Breast epithelium (tissue), 4 donors: ENCODE measurements at regions of chr7 and their contacts with region 1.

Region 1: DNA sequence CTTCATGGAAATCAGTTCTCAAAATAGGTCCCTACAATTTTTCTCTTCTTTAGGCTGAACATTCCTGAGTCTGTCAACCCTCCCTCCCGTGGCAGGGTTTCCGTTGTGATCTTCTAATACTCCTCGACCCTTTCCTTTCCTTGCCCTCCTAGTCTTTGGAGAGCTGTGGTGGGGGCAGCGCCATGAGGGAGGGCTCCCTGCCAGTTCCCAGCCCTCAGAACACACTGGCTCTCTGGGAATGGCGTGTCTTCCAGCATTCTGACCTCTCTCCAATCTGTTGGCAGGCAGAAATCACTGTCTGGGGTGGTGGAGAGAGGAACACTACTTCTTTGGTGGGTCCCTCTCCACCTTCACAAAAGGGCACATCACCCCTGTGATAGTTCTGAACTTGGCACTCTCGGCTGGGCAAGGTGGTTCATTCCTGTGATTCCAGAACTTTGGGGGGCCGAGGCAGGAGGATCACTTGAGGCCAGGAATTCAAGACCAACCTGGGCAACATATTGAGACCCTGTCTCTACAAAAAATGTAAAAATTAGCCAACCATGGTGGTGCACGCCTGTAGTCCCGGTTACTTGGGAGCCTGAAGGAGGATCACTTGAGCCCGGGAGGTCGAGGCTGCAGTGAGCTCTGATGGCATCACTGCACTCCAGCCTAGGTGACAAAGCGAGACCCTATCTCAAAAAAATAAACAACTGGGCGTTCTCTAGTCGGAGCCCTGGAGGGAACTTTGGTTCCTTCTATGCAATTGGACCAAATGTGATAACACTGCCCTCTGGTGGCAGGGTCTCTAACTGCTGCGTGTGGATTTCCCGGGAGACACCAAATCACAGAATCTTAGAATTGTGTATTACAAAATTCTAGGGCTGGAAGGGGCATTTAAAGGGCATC is 13.1 kb upstream of the ARPC1A start:
- DNase-seq: peak; percentile 52 to 71
- H3K4me3 ChIP-seq: no peak overlapping the region
- H3K27ac ChIP-seq: no peak overlapping the region
- H3K4me1 ChIP-seq: no peaks in the 10 kb centered on the region
- H3K27me3 ChIP-seq: no peaks in the 10 kb centered on the region
- CTCF ChIP-seq: peak; percentile 62 to 84 (median 77)
- POLR2A ChIP-seq: no peak

Region 2: GRCh38 chr7:99036546-99037111 is 275.9 kb before region 1 on chr7:
- intact Hi-C with region 1: loop called (anchors 10 kb)
- DNase-seq: no peak
- H3K4me3 ChIP-seq: no peak overlapping the region
- H3K27ac ChIP-seq: peak overlapping the region in 1 of 2 donors; percentile 3
- H3K4me1 ChIP-seq: no peaks in the 10 kb centered on the region
- H3K27me3 ChIP-seq: no peaks in the 10 kb centered on the region
- CTCF ChIP-seq: peak in 1 of 3 donors; percentile 18
- POLR2A ChIP-seq: no peak